Activated CD4-positive, alpha-beta T cell treated with anti-CD3 and anti-CD28 coated beads, Interleukin-2, amount 10 ng/mL, durations not matched to agents 24 days and 14 days (primary cell): ENCODE measurements at regions of chr11 and their contacts with region 1.

Region 1: GRCh38 chr11:119363851-119364590 is 17.5 kb downstream of the USP2 start:
- DNase-seq: peak; percentile 90
- H3K4me3 Mint-ChIP-seq: peak overlapping the region; percentile 81
- H3K27ac Mint-ChIP-seq: no peak overlapping the region
- H3K4me1 Mint-ChIP-seq: peaks cover 7% of the 10 kb centered on the region
- H3K27me3 Mint-ChIP-seq: peaks cover 42% of the 10 kb centered on the region

Region 2: DNA sequence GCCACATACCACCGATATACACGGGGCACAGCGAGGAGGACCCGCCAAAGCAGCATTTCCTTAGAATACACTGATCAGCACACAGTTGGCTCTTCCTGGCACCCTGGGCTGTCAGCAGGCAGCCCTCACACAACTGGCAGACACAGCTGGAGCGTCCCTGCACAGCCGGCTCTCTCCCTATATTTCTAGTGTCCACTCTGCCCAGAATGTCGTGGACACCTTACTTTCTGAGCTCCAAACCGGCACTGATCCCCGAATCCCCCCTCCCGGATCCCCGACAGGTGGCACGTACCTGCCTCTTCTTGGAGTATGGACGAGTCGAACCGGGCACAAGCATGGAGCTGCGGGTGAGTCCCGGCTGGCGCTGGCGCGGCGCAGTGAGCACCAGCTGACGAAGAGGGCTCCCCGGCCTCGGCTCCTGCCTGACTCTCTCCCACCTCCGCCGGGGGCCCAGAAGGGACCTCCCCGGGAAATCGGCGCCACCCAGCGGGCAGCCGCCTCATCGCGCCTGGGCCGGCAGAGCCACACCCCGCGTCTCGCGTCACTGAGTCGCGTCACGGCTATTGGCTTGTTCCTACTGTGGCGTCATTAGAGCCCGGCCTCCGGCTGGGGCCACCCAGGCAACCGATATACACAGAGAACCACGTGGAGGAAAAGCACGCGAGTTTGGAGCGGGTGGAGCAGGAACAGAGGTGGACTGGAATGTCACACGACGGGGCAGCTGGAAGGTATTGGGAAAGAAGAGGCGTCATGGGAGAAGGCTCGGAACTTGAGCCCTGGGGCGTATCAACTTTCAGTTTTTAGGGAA is 17.4 kb after region 1 on chr11 and contains the start of gene USP2:
- intact Hi-C with region 1: loop called (anchors 1 kb)
- DNase-seq: peak; percentile 99
- H3K4me3 Mint-ChIP-seq: no peak within 1 kb of the TSS
- H3K27ac Mint-ChIP-seq: no peak within 1 kb of the TSS
- H3K4me1 Mint-ChIP-seq: peaks cover 10% of the 10 kb centered on the region
- H3K27me3 Mint-ChIP-seq: peaks cover 6% of the 10 kb centered on the region
- total RNA-seq, gene USP2: 0.09 and 0.35 TPM in 2 replicates

Region 3: DNA sequence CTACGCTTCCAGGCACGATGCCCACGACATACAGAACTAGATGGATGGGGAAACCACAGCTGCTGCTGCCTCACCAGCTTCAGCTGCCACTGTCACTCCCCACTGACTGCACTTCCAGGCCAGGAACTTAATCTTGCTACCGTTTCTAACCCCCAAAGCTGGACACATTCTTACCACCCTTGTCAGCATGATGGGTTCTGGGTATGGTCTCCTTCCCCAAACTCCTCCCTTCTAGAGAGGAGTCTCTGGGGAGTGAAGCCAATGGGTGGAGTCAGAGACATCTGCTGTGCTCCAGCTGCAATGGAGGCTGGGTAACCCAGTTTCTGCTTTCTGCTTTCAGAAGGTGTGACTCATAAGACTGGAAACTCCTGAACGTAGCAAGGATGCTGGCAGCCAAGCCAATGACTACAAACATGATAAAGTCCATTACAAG is 146.0 kb after region 1 on chr11:
- intact Hi-C with region 1: no loop called
- DNase-seq: peak; percentile 64
- H3K4me3 Mint-ChIP-seq: no peak overlapping the region
- H3K27ac Mint-ChIP-seq: peak overlapping the region; percentile 61
- H3K4me1 Mint-ChIP-seq: peaks cover 13% of the 10 kb centered on the region
- H3K27me3 Mint-ChIP-seq: no peaks in the 10 kb centered on the region